A549 (cell line): ENCODE measurements at regions of chr11 and their contacts with region 1.

Region 1: DNA sequence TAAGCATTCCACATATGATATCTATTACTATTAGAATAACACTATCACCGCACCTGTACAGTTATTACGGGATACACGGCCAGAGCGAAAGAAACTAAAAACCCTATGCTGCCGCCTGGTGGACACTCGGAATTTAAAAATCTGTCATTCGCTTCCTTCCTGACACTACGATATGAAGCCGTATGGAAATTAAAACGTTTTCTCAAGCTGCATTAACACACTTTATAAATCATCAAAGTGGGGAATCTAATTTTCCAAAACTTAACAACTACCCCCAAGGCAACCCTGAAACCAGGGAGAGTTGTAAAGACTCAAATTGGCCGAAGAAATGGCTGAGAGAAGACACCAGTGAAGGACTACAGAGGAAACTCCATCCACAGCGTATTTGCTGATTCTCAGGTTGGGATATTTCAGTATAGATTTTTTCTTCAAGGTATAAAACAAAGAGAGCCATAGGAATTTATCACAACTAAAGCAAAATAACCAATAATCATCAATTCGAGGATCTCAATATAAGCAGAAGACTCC is 1.4 kb downstream of the CCDC73 start:
- DNase-seq: peak; percentile 31
- ATAC-seq: peak; percentile 91 to 94
- H3K4me3 ChIP-seq: peak overlapping the region; percentile 18; the same call in 1 of the 3 replicates
- H3K27ac ChIP-seq: no peak overlapping the region
- H3K4me1 ChIP-seq: 0 out of 3 replicates have a peak, but pooled peaks cover 3% of the 10 kb centered on the region
- CTCF ChIP-seq: peak; percentile 95
- EP300 ChIP-seq: no peak
- POLR2A ChIP-seq: no peak
- RAD21 ChIP-seq: peak; percentile 82 to 90

Region 2: GRCh38 chr11:32809313-32809712 is 16.3 kb after region 1 on chr11:
- CTCF ChIA-PET with region 1: interaction called, 16 read pairs
- POLR2A ChIA-PET with region 1: no interaction called
- DNase-seq: peak; percentile 66 to 84
- ATAC-seq: peak; percentile 100
- H3K4me3 ChIP-seq: no peak overlapping the region
- H3K27ac ChIP-seq: no peak overlapping the region
- H3K4me1 ChIP-seq: no peaks in the 10 kb centered on the region
- CTCF ChIP-seq: peak; percentile 83
- EP300 ChIP-seq: no peak
- POLR2A ChIP-seq: no peak
- RAD21 ChIP-seq: peak; percentile 73 to 83